Left colon (tissue), 2 donors: ENCODE measurements at regions of chr21 and their contacts with region 1.

Region 1: DNA sequence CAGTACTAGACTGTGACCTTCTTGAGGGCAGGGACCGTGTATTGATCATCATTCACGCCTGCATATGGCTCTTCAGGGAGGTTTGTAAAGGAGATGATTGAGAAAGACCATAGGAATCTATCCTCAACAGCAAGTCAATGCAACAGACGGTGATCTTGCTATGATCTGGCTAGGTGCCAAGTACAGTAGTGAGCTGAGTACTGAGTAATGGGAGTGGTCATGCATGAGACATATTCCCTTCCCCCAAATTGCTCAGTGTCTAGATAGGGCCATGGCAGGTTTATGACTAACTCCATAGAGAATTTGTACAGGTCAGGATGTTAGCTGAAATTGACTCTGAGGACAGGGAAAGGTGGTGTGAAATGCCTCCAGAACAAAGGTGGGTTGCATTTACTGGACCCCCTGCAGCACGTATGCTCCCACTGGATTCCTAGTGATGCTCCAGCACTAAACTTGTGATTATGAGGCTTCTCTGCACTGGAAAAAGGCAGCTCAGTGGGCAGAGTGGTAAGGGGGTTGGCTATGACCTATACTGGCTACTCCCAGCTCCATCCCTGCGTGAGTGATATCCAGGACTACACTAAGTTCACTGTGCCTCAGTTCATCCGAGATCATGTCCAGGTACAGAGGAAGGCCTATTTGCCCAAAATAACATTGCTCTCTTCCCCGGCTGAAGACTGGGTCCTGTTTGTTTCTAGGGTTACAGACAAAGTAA is 37.2 kb downstream of the KCNJ6 start:
- DNase-seq: no peak
- ATAC-seq: no peak

Region 2: GRCh38 chr21:37627074-37627473 is 252.0 kb before region 1 on chr21:
- intact Hi-C with region 1: no loop called
- DNase-seq: no peak
- ATAC-seq: no peak

Region 3: DNA sequence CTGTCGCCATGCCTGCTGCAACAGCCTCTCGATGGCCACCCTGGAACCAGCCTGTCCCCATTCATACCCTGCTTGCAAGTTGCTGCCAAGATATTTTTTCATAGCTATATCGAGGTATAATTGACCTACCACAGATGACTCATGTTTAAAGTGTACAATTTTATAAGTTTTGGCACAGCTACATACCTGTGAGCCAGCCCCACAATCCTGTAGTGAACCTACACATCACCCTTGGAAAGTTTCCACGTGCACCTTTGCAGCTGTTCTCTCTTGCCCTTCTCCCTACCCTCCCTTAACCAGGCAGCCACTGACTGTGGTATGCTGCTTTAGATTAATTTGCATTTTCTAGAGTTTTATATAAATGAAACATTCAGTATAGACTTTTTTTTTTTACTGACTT is 60.1 kb after region 1 on chr21:
- intact Hi-C with region 1: loop called in 1 of 2 experiments (anchors 10 kb)
- DNase-seq: peak; percentile 19 to 30
- ATAC-seq: peak; percentile 82

Region 4: GRCh38 chr21:38219049-38219628 is 340.0 kb after region 1 on chr21:
- intact Hi-C with region 1: no loop called
- DNase-seq: peak; percentile 55 to 77
- ATAC-seq: peak; percentile 97